CD8-positive, alpha-beta memory T cell (primary cell): ENCODE measurements at regions of chr7 and their contacts with region 1.

Region 1: DNA sequence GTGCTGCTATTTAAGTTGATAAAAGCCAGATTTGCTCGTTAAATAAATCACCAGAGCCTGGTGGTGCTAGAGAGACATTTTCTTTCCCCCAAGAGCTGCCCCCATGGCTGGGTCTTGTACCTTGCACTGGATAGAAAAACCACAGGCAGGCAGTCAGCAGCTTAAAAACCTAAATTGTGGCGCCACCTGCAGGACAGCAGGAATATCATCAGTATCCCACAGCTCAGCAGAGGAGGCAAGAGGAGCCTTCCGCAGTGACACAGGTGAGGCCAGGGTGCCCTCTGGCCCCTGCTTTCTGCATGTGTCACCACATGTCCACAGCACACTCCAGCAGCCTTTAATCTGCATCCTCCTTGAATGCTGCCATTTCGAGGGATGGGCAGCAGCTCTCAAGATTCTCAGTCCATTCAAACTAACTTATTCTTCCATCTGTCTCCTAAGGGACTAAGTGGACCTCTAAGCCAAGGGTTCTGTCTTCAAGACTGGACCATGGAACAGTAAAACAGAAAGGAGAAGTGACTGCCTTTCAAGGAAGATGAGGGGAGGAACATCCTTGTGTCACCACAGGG is 4.5 kb upstream of the PLXNA4 start:
- DNase-seq: peak; percentile 52 to 71 (median 61)
- H3K4me3 ChIP-seq: no peak overlapping the region
- H3K4me3 Mint-ChIP-seq: no peak overlapping the region
- H3K27ac ChIP-seq: no peak overlapping the region
- H3K27ac Mint-ChIP-seq: no peak overlapping the region
- H3K4me1 ChIP-seq: peaks cover 2% of the 10 kb centered on the region
- H3K4me1 Mint-ChIP-seq: peaks cover 2 to 13% (median 9%) of the 10 kb centered on the region in 3 donors
- H3K27me3 ChIP-seq: peaks cover 10% of the 10 kb centered on the region
- H3K27me3 Mint-ChIP-seq: peaks cover 31 to 47% of the 10 kb centered on the region in 2 donors

Region 2: DNA sequence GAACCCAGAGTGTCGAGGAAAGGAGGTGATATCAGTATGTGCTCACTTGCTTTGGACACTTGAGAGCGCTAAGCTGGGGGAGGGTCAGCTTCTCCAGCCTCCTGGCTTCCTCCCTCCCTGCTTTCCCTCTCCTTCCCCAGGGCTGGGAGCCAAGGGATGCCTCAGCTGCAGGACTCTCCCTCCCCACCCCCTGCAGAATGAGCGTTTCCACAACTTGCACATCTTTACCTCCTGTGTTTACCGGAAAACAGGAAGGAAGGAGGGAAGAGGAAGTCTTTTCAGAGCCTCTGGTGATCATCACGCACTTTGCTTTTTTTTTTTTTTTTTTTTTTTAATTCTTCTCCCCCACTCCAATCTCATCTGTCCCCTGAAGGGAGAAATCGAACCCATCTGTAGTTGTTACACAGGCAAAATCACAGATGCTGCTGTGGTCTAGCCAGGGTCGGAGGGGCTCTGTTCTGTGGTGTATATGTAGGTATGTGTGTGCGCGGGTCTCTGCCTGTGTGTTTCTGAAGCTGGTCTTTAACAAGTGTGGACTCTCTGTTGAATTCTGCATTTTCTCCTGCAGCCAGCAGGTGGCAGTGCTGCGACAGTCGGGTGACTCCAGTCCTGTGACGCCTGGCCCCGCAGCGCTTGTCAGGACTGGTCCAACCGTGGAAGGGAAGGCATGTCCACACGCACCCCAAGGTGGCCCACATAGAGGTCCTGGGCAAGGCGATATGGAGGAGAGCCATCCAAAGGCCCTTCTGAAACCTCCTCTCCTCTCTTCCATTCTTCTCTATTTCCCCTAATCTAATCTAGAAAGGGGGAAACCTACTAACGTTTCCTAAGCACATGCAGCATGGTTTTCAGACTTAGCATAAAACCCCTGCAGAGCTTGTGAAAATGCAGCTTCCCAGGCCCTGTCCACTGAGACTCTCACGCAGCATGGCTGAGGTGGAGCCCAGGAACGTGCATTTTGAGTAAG is 262.2 kb before region 1 on chr7:
- CTCF ChIA-PET with region 1: interaction called, 62 read pairs
- POLR2A ChIA-PET with region 1: no interaction called
- DNase-seq: peak; percentile 51 to 78 (median 64)
- H3K4me3 ChIP-seq: peak overlapping the region; percentile 19
- H3K4me3 Mint-ChIP-seq: peak overlapping the region in 4 of 7 donors; percentile 1 to 53 (median 40)
- H3K27ac ChIP-seq: no peak overlapping the region
- H3K27ac Mint-ChIP-seq: no peak overlapping the region
- H3K4me1 ChIP-seq: peaks cover 8% of the 10 kb centered on the region
- H3K4me1 Mint-ChIP-seq: peaks cover 7 to 16% (median 13%) of the 10 kb centered on the region in 3 donors
- H3K27me3 ChIP-seq: peaks cover 5% of the 10 kb centered on the region
- H3K27me3 Mint-ChIP-seq: peaks cover 20 to 51% of the 10 kb centered on the region in 2 donors

Region 3: DNA sequence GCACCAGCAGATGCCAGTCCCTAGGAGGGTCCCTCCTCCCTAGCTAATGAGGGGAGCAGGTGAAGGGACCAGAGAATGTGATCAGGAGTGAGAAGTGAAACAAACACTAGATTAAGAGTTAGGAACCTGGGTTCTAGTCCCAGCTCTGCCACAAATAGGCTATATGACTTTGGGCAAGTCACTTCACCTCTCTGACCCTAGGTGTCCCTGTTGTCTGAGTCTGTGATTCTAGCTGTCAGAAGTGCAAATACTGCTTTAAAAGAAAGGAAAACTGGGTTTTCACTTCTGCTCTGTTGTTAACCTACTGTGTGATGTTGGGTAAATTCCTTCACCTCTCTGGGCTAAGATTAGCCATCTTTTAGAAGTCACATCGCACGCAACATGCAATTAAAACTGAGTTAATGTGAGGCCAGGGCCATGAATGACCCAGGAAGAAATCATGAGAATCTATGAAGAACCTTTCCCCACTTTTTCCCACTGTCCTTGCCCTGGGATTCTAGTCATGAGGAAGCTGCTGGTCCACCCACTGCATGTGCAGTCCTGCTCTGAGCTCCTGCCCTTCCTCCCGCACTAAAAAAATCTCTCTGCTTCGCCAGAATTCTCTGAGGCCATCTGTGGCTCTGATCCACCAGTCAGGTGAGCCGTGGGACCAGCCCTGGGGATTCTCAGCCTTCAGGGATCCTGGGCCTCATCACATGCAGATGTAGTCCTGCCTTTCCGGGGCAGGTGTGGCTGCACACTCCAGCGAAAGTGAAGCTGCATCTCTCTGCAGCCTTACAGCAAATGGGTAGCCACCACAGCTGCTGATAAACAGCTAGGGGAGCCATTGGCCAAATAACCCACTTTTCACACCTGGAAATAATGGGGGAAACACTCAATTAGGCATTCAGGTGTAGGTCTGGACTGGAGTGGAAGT is 186.3 kb before region 1 on chr7:
- CTCF ChIA-PET with region 1: interaction called, 80 read pairs
- POLR2A ChIA-PET with region 1: no interaction called
- DNase-seq: peak in 3 of 5 donors; percentile 9 to 46 (median 42)
- H3K4me3 ChIP-seq: no peak overlapping the region
- H3K4me3 Mint-ChIP-seq: no peak overlapping the region
- H3K27ac ChIP-seq: no peak overlapping the region
- H3K27ac Mint-ChIP-seq: peak overlapping the region in 1 of 8 donors; percentile 63
- H3K4me1 ChIP-seq: no peaks in the 10 kb centered on the region
- H3K4me1 Mint-ChIP-seq: peaks cover 4 to 8% (median 7%) of the 10 kb centered on the region in 3 donors
- H3K27me3 ChIP-seq: no peaks in the 10 kb centered on the region
- H3K27me3 Mint-ChIP-seq: peaks cover 4 to 11% of the 10 kb centered on the region in 2 donors